ENCODE measurements at regions of chr12 and their contacts with region 1.

Region 1: GRCh38 chr12:101564912-101565311 is 29.9 kb upstream of the MYBPC1 start:
- DNase-seq: peak; percentile 14
- H3K4me3 Mint-ChIP-seq: no peak overlapping the region
- H3K27ac Mint-ChIP-seq: no peak overlapping the region
- H3K4me1 Mint-ChIP-seq: peaks cover 21% of the 10 kb centered on the region
- H3K27me3 Mint-ChIP-seq: peaks cover 10% of the 10 kb centered on the region

Region 2: GRCh38 chr12:101407436-101408345 is 157.2 kb before region 1 on chr12 and contains the start of gene ARL1:
- CTCF ChIA-PET with region 1: no interaction called
- intact Hi-C with region 1: loop called (anchors 5 kb)
- DNase-seq: peak; percentile 84
- H3K4me3 Mint-ChIP-seq: peak within 1 kb of the TSS; percentile 93
- H3K27ac Mint-ChIP-seq: peak within 1 kb of the TSS; percentile 90
- H3K4me1 Mint-ChIP-seq: peaks cover 19% of the 10 kb centered on the region
- H3K27me3 Mint-ChIP-seq: peaks cover 6% of the 10 kb centered on the region
- total RNA-seq, gene ARL1: 44.1 to 48.4 TPM

Region 3: GRCh38 chr12:101925361-101925760 is 360.4 kb after region 1 on chr12:
- CTCF ChIA-PET with region 1: no interaction called
- intact Hi-C with region 1: no loop called
- DNase-seq: no peak
- H3K4me3 Mint-ChIP-seq: no peak overlapping the region
- H3K27ac Mint-ChIP-seq: no peak overlapping the region
- H3K4me1 Mint-ChIP-seq: peaks cover 4% of the 10 kb centered on the region
- H3K27me3 Mint-ChIP-seq: peaks cover 2% of the 10 kb centered on the region

Measured in activated naive CD4-positive, alpha-beta T cell treated with anti-CD3 and anti-CD28 coated beads for 36 hours (primary cell).